ENCODE measurements at regions of chr12 and their contacts with region 1.

Region 1: GRCh38 chr12:49842519-49843352 is at the start of gene BCDIN3D:
- DNase-seq: peak; percentile 91 to 95 (median 93)
- H3K4me3 ChIP-seq: peak within 1 kb of the TSS; percentile 62 to 90 (median 84)
- H3K27ac ChIP-seq: peak within 1 kb of the TSS; percentile 64 to 86
- H3K4me1 ChIP-seq: peaks cover 7 to 40% (median 22%) of the 10 kb centered on the region in 4 experiments
- H3K27me3 ChIP-seq: no peaks in the 10 kb centered on the region

Region 2: GRCh38 chr12:49644620-49644994 is 198.1 kb before region 1 on chr12:
- CTCF ChIA-PET with region 1: interaction called, 16 read pairs
- POLR2A ChIA-PET with region 1: no interaction called
- DNase-seq: peak; percentile 79 to 91 (median 87)
- H3K4me3 ChIP-seq: peak overlapping the region in 1 of 7 experiments; percentile 19
- H3K27ac ChIP-seq: no peak overlapping the region
- H3K4me1 ChIP-seq: peaks cover 0 to 23% (median 15%) of the 10 kb centered on the region in 4 experiments
- H3K27me3 ChIP-seq: no peaks in the 10 kb centered on the region

Region 3: DNA sequence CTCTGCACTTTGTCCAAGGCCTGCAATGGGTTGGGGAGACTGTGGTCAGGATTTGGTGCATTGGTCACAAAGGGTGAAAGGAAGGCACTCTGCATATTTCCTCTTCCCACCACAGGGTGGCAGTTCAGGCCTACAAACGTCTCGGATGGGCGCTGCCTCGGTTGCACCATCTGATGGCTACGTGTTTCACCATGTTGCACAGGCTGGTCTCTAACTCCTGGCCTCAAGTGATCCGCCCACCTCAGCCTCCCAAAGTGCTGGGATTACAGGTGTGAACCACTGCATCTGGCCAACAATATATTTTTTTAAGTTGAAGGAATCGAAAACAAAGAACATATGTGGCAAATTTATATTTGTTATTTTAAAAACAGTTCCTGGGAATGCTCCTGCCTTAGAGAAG is 66.3 kb before region 1 on chr12:
- CTCF ChIA-PET with region 1: interaction called, 96 read pairs
- POLR2A ChIA-PET with region 1: interaction called, 3 read pairs
- DNase-seq: peak; percentile 39 to 63 (median 60)
- H3K4me3 ChIP-seq: no peak overlapping the region
- H3K27ac ChIP-seq: no peak overlapping the region
- H3K4me1 ChIP-seq: peaks cover 0 to 5% (median 0%) of the 10 kb centered on the region in 4 experiments
- H3K27me3 ChIP-seq: no peaks in the 10 kb centered on the region

Region 4: GRCh38 chr12:49800421-49801140 is 42.2 kb before region 1 on chr12:
- CTCF ChIA-PET with region 1: interaction called, 16 read pairs
- POLR2A ChIA-PET with region 1: no interaction called
- DNase-seq: no peak
- H3K4me3 ChIP-seq: no peak overlapping the region
- H3K27ac ChIP-seq: no peak overlapping the region
- H3K4me1 ChIP-seq: no peaks in the 10 kb centered on the region
- H3K27me3 ChIP-seq: no peaks in the 10 kb centered on the region

Region 5: GRCh38 chr12:49828133-49829091 is 14.3 kb before region 1 on chr12 and contains the start of gene NCKAP5L:
- CTCF ChIA-PET with region 1: interaction called, 64 read pairs
- POLR2A ChIA-PET with region 1: interaction called, 3 read pairs
- DNase-seq: peak; percentile 97 to 99 (median 99)
- H3K4me3 ChIP-seq: peak within 1 kb of the TSS; percentile 39 to 87 (median 76)
- H3K27ac ChIP-seq: peak within 1 kb of the TSS in 1 of 2 experiments; percentile 75
- H3K4me1 ChIP-seq: peaks cover 11 to 49% (median 37%) of the 10 kb centered on the region in 4 experiments
- H3K27me3 ChIP-seq: no peaks in the 10 kb centered on the region

Measured in common myeloid progenitor, CD34-positive (primary cell).